CD4-positive, alpha-beta memory T cell (primary cell): ENCODE measurements at regions of chr4 and their contacts with region 1.

Region 1: DNA sequence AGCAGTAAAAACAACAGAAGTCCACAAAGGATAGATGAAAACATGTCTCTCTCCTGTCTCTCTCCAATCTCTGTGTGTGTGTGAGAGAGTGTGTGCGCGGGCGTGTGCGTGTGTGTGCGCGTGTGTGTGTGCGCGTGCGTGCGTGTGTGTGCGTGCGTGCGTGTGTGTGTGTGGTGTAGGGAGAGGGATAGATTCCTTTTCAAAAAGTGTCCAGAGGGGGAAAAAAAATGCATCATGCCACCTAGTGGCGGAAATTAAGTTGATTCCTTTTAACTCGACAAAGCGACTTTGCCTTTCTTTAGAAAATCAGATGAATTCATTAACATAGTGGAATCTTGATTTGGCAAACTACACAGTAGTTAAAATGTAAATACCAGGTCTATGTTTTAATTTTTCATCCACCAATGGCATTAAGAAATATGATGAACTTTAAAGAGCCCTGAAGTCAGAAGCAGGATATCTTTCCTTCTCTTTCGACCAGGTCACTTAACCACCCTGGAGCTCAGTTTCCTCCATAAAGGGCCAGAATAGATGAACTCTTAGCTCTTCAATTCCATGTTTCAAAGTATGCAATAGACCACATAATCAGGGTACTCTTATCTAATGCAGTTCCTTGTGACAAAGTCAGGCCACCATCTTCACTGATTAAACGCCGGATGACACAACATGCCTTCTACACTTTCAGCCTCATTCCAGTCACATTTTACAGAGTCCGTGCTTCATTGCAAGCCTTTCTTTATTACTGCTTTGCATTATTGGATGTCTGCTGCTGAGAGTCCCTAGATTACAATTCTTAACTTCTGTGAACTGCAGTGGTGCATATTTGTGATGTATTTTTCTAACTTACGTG is 162.8 kb downstream of the FBXO8 start:
- DNase-seq: peak in 3 of 5 donors; percentile 4 to 7 (median 6)
- H3K4me3 ChIP-seq: no peak overlapping the region
- H3K4me3 Mint-ChIP-seq: peak overlapping the region in 4 of 8 donors; percentile 27 to 42 (median 40)
- H3K27ac ChIP-seq: no peak overlapping the region
- H3K27ac Mint-ChIP-seq: peak overlapping the region in 1 of 7 donors; percentile 68
- H3K4me1 ChIP-seq: no peaks in the 10 kb centered on the region
- H3K4me1 Mint-ChIP-seq: peaks cover 0 to 6% (median 5%) of the 10 kb centered on the region in 4 donors
- H3K27me3 ChIP-seq: peaks cover 6% of the 10 kb centered on the region
- H3K27me3 Mint-ChIP-seq: peaks cover 28 to 39% of the 10 kb centered on the region in 2 donors

Region 2: GRCh38 chr4:174318829-174319764 is 198.4 kb after region 1 on chr4:
- CTCF ChIA-PET with region 1: interaction called, 3 read pairs
- POLR2A ChIA-PET with region 1: no interaction called
- intact Hi-C with region 1: loop called (anchors 1 kb)
- DNase-seq: peak in 4 of 5 donors; percentile 25 to 43 (median 26)
- H3K4me3 ChIP-seq: no peak overlapping the region
- H3K4me3 Mint-ChIP-seq: no peak overlapping the region
- H3K27ac ChIP-seq: no peak overlapping the region
- H3K27ac Mint-ChIP-seq: no peak overlapping the region
- H3K4me1 ChIP-seq: no peaks in the 10 kb centered on the region
- H3K4me1 Mint-ChIP-seq: no peaks in the 10 kb centered on the region
- H3K27me3 ChIP-seq: no peaks in the 10 kb centered on the region
- H3K27me3 Mint-ChIP-seq: no peaks in the 10 kb centered on the region